ENCODE measurements at regions of chr18 and their contacts with region 1.

Region 1: GRCh38 chr18:62486304-62486964 is 36.4 kb upstream of the ZCCHC2 start:
- DNase-seq: peak; percentile 96
- H3K4me3 Mint-ChIP-seq: peak overlapping the region; percentile 56
- H3K27ac Mint-ChIP-seq: peak overlapping the region; percentile 83
- H3K4me1 Mint-ChIP-seq: peaks cover 22% of the 10 kb centered on the region
- H3K27me3 Mint-ChIP-seq: no peaks in the 10 kb centered on the region
- CTCF ChIP-seq: no peak

Region 2: DNA sequence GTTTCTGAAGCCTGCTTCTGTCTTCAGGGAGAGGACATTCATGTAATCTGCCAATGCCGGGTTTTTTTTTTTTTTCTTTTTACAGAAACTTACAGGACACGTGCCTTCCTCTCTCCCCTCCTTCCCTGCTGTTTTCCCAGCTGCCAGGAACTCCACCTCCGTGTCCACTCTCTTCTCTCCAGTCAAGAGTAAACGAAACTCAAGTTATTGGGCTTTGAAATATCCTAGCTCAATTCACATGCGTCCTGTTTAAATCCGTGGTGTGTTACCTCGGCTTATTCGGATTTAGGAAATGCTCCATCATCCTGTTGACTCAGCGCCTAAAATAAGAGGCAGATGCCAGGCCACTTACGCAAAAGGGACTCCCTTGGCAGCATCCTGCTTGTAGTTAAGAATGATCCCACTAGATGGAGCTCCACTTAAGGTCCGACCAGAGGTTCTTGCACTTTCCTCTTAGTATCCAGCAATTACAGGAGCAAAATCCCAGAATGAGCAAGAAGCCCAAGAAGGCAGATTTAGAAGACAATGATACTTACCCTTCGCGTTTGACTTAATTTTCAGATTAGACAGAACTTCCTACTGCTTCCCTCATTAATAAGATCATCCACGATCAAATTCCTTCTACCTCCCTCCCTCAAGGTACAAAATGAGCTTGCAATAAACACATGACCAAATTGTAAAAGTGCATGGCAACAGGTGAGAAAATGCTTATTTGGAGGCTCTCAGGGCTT is 60.8 kb before region 1 on chr18:
- CTCF ChIA-PET with region 1: interaction called, 5 read pairs
- POLR2A ChIA-PET with region 1: interaction called, 6 read pairs
- intact Hi-C with region 1: loop called (anchors 1 kb)
- DNase-seq: peak; percentile 97
- H3K4me3 Mint-ChIP-seq: peak overlapping the region; percentile 65
- H3K27ac Mint-ChIP-seq: peak overlapping the region; percentile 90
- H3K4me1 Mint-ChIP-seq: peaks cover 21% of the 10 kb centered on the region
- H3K27me3 Mint-ChIP-seq: no peaks in the 10 kb centered on the region
- CTCF ChIP-seq: peak; percentile 91

Region 3: DNA sequence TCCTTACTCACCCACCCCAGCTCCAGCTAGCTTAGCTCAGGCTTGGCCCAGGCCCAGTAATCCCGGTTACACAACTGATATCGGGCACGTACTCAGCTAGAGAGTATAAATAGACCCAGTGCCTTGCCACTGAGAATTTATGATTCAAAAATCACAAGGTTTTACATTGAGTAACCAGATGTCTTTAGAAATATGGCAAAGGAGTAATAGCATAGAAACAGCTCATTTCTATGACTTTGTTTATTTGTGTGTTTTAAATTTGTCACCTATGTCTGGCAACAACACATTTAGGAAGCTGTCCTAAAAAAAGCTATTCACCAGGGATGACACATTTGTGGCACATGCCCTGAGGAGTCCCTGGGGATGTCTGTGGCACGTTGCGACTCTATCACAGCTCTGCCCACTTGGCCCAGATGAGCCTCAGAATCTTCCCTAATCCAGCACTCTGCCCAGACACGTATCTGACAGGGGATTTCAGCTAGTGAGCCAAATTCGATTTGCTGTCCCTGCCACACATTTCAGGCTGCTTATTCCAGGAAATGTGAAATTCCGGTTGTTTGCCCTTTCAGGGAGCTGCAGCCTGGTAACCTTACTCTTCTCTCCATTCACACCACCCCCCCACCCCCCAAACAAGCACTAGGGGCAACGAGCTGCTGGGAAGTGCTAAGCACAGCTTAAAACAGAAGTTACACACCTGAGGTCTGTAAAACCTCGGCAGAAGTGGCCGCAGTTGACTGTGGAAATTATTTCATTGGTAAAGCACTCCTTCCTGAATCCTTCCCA is 49.0 kb before region 1 on chr18:
- CTCF ChIA-PET with region 1: interaction called, 4 read pairs
- POLR2A ChIA-PET with region 1: interaction called, 25 read pairs
- intact Hi-C with region 1: no loop called
- DNase-seq: peak; percentile 95
- H3K4me3 Mint-ChIP-seq: peak overlapping the region; percentile 55
- H3K27ac Mint-ChIP-seq: peak overlapping the region; percentile 93
- H3K4me1 Mint-ChIP-seq: peaks cover 18% of the 10 kb centered on the region
- H3K27me3 Mint-ChIP-seq: no peaks in the 10 kb centered on the region
- CTCF ChIP-seq: no peak

Region 4: GRCh38 chr18:62445386-62445917 is 41.0 kb before region 1 on chr18:
- CTCF ChIA-PET with region 1: interaction called, 4 read pairs
- POLR2A ChIA-PET with region 1: interaction called, 8 read pairs
- intact Hi-C with region 1: loop called (anchors 2 kb)
- DNase-seq: peak; percentile 59
- H3K4me3 Mint-ChIP-seq: no peak overlapping the region
- H3K27ac Mint-ChIP-seq: no peak overlapping the region
- H3K4me1 Mint-ChIP-seq: peaks cover 20% of the 10 kb centered on the region
- H3K27me3 Mint-ChIP-seq: no peaks in the 10 kb centered on the region
- CTCF ChIP-seq: no peak

Region 5: DNA sequence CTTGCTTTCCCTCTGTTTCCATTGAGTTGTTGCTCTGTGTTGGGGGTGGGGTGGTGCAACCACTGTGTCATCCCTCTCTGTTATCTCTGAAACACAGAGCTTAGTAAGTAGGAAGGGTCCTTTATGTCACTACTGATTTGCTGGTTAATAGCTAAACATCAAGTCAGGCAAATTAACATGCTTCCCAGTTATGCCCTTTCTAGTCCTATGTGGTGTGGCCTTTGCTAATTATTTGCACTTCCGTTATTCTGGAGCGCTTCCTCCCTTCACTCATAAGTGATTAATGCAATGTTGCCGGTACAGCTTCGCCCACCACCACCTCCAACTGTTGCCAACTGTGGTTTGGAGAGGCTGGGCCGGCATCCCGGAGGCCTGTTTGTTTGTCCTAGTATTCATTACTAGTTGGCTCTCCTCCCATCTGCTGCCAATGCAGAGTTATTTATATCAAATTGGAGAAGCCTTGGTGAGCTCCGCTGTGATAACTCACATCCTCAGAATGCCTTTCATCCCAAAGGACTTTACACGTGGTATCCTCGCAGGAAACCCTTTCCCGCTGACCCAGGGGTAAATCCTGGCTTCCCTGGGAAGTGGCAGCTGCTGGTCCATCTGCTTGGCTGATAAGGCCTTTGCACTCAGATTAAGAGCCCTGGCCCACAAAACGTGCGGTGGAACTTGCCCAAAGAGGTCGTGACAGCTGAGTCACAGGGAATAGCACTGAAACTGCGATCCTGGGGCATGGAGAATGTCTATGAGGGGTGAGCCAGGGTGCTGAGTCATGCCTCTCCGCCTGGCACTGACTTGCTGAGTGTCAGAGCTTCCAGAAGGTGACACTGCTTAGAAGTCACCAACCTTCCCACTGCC is 35.7 kb before region 1 on chr18:
- CTCF ChIA-PET with region 1: interaction called, 4 read pairs
- POLR2A ChIA-PET with region 1: interaction called, 8 read pairs
- intact Hi-C with region 1: loop called (anchors 2 kb)
- DNase-seq: peak; percentile 91
- H3K4me3 Mint-ChIP-seq: peak overlapping the region; percentile 30
- H3K27ac Mint-ChIP-seq: peak overlapping the region; percentile 67
- H3K4me1 Mint-ChIP-seq: peaks cover 29% of the 10 kb centered on the region
- H3K27me3 Mint-ChIP-seq: no peaks in the 10 kb centered on the region
- CTCF ChIP-seq: no peak

Region 6: DNA sequence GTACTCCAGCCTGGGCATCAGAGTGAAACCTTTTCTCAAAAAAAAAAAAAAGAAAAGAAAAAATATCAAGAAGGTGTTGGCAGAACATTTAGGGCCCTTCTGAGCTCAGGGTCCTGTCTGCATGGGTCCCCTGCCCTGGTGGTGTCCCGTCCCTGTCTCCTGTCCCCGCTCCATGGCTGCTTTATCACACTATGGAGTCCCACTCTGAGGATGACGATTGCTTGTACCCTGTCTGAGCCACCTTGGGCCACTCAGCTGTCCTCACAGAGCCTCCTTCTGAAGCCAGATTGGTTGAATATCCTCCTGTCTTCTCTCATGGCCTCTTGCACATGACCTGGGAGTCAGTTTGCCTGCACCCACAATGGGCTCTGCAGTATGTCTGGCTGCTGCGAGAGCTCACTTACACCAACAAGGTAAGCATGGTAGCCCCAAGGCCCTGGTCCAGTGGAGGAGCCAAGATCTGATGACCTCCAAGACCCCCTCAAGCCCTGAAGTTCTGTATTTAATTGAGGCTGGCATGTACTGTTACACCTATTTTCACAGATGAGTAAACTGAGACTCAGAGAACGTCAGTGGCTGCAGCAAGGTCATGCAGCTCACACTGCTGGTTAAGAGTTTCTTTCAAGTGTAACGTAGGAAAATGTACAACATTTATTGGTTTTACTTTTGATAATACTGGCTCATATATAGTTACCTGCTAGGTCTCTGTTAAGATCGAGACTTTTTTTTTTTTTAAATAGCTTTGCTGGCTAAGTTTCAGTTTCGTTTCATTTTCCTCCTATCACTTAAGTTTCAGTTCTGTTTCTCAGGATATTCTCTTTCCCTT is 19.4 kb after region 1 on chr18:
- CTCF ChIA-PET with region 1: interaction called, 3 read pairs
- POLR2A ChIA-PET with region 1: interaction called, 20 read pairs
- intact Hi-C with region 1: no loop called
- DNase-seq: peak; percentile 30
- H3K4me3 Mint-ChIP-seq: peak overlapping the region; percentile 75
- H3K27ac Mint-ChIP-seq: peak overlapping the region; percentile 77
- H3K4me1 Mint-ChIP-seq: no peaks in the 10 kb centered on the region
- H3K27me3 Mint-ChIP-seq: no peaks in the 10 kb centered on the region
- CTCF ChIP-seq: no peak